Activated naive CD4-positive, alpha-beta T cell treated with anti-CD3 and anti-CD28 coated beads for 36 hours (primary cell): ENCODE measurements at regions of chr5 and their contacts with region 1.

Region 1: GRCh38 chr5:134225618-134226440 is at the start of gene PPP2CA:
- DNase-seq: peak; percentile 99
- H3K4me3 Mint-ChIP-seq: peak within 1 kb of the TSS; percentile 96
- H3K27ac Mint-ChIP-seq: peak within 1 kb of the TSS; percentile 96
- H3K4me1 Mint-ChIP-seq: peaks cover 52% of the 10 kb centered on the region
- H3K27me3 Mint-ChIP-seq: no peaks in the 10 kb centered on the region
- total RNA-seq, gene PPP2CA: 132 to 135 TPM

Region 2: DNA sequence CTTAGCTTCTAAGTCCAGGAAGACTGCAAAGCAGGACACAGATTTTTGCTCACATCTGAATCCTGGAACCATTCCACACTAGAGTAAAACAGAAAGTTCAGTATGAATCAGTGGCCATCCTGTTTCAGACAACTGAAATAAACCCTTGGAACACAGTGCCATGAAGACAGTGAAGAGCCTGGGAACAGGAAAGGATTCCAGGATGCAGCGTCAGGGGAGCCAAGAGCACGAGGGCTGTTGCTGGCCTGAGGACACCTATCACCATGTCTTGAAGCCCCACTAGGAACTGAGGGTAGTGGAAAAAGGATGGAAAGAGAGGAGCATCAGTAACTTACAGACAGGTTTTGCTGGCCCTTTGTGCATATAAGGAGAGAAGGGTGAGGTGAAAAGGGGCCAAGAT is 498.2 kb before region 1 on chr5:
- CTCF ChIA-PET with region 1: no interaction called
- intact Hi-C with region 1: no loop called
- DNase-seq: no peak
- H3K4me3 Mint-ChIP-seq: no peak overlapping the region
- H3K27ac Mint-ChIP-seq: no peak overlapping the region
- H3K4me1 Mint-ChIP-seq: no peaks in the 10 kb centered on the region
- H3K27me3 Mint-ChIP-seq: peaks cover 8% of the 10 kb centered on the region

Region 3: DNA sequence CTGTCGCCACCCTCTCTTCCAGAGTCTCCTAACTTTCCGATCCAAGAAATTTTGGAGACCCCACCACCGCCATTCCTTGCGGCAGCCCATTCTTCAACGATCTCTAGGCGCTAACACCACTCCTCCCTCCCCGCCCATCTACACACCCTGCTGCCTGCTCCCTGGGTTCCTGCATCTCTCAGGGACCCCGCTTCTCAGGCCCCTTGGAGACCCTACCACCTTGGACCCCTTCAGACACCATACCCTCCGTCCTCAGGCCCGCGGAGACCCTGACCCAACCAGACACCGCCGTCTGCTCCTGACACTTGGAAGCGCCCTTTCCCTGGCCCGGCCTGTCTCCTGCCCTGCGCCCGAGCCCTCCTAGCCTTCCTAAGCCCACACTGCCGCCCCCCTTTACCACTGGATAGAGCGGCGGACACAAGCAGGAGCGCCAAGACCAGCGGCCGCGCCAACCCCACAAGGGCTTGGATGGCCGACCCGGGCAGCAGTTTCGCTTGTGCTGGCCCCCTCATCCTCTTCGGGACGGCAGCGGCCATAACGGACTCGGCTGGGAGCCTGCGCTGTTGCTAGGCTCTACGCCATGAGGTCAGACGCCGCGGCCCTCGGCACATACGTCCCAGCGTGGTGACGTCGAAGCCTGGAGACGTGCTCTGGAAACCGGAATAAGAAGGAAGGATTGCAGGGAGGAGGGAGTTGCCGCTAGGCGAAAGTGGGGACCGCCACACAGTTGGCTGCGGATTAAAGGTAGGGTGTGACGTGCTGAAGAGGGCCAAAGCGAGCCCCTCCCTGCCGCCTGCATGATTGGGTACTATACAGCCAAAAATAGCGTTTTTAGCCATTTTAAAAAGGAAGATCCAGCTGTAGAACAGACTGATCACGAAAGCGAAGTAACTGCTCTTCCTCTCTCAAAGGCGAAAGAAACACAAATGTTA is 257.5 kb before region 1 on chr5 and contains the start of gene C5orf15:
- CTCF ChIA-PET with region 1: no interaction called
- intact Hi-C with region 1: loop called (anchors 1 kb)
- DNase-seq: peak; percentile 96
- H3K4me3 Mint-ChIP-seq: peak within 1 kb of the TSS; percentile 96
- H3K27ac Mint-ChIP-seq: peak within 1 kb of the TSS; percentile 93
- H3K4me1 Mint-ChIP-seq: peaks cover 46% of the 10 kb centered on the region
- H3K27me3 Mint-ChIP-seq: no peaks in the 10 kb centered on the region
- total RNA-seq, gene C5orf15: 18.1 to 18.6 TPM

Region 4: GRCh38 chr5:134083517-134083916 is 142.3 kb before region 1 on chr5:
- CTCF ChIA-PET with region 1: no interaction called
- intact Hi-C with region 1: no loop called
- DNase-seq: peak; percentile 8
- H3K4me3 Mint-ChIP-seq: no peak overlapping the region
- H3K27ac Mint-ChIP-seq: no peak overlapping the region
- H3K4me1 Mint-ChIP-seq: peaks cover 79% of the 10 kb centered on the region
- H3K27me3 Mint-ChIP-seq: no peaks in the 10 kb centered on the region

Region 5: DNA sequence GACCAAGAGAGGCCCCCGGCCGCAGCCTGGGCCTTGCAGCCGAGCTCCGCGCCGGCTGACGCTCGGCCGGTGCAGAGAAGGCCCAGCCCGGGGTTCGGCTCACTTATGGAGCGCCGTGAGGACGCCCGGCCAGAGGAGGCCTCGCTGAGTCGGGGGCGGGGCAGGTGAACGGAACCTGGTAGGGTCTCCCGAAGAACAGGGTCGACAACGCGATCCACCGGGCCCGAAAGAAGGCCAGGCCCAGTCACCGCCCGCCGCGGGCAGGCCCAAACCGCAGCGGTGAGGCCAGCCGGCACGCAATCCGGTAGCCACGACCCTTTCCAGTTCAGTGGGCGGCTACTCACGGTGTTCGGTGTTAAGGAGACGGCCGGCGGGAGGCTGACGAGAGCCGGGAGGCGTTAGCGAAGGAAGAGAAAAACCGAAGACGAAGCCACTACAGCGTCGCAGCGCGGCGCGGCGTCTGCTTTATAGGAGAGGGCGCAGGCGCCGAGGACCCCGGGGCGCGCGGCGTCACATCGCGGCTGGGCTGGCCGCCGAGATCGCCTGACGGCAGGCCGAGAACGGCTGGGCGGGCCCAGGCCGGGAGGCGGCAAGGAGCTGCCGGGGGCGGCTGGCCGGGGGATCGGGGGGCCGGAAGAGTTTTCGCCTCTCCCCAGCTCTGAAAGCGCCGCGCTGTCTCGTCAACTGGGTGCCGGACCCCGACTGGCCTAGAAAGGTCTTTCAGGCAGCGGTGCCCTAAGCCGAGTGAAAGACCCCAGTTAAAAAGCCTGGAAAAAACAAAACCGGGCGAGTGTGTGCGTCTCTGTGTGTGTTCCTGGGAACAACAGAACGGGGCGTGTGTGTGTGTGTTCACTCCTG is 49.1 kb before region 1 on chr5 and contains the start of gene SKP1:
- CTCF ChIA-PET with region 1: no interaction called
- intact Hi-C with region 1: loop called (anchors 1 kb)
- DNase-seq: peak; percentile 83
- H3K4me3 Mint-ChIP-seq: peak within 1 kb of the TSS; percentile 96
- H3K27ac Mint-ChIP-seq: peak within 1 kb of the TSS; percentile 94
- H3K4me1 Mint-ChIP-seq: peaks cover 31% of the 10 kb centered on the region
- H3K27me3 Mint-ChIP-seq: no peaks in the 10 kb centered on the region
- total RNA-seq, gene SKP1: 307 to 309 TPM

Region 6: DNA sequence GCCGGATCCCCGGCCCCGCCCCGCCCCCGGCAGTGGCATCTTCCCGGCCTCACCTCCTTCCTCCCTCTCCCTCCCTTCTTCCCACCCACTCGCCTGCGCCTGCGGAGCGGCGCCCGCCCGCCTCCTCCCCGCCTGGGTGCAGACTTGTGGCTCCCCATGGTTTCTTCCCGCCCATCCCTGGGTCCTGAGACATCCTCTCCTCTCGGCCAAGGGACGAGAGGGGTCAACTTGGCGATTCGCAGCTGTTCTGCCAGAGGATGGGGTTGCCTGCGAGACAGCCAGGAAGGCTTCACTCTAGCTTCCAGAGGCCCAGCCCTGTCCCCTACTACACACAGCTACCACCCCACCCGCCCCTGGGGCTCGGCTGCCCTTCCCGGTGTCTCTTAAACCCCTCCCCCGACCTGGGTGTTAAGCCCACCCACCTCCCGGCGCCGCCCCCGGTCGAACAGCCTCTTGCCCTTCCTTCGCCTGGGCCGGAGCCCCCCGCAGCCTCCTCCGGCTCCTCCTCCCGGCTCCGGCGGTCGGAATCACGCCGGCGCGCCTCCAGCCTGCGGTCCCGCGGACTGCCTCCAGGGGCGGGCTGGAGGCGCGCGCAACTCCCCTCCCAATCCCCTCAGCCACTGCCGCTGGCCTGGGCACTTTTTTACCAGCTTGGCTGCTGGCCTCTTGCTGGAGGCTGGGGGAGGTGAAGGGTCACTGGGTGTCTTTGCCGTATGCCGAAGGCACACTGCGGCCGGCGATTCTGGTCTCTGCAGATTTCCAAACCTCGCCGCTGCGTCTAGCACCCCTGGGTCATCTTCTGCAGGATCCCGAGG is 301.5 kb after region 1 on chr5:
- CTCF ChIA-PET with region 1: no interaction called
- intact Hi-C with region 1: loop called (anchors 1 kb)
- DNase-seq: peak; percentile 78
- H3K4me3 Mint-ChIP-seq: peak overlapping the region; percentile 88
- H3K27ac Mint-ChIP-seq: peak overlapping the region; percentile 95
- H3K4me1 Mint-ChIP-seq: peaks cover 46% of the 10 kb centered on the region
- H3K27me3 Mint-ChIP-seq: no peaks in the 10 kb centered on the region

Region 7: DNA sequence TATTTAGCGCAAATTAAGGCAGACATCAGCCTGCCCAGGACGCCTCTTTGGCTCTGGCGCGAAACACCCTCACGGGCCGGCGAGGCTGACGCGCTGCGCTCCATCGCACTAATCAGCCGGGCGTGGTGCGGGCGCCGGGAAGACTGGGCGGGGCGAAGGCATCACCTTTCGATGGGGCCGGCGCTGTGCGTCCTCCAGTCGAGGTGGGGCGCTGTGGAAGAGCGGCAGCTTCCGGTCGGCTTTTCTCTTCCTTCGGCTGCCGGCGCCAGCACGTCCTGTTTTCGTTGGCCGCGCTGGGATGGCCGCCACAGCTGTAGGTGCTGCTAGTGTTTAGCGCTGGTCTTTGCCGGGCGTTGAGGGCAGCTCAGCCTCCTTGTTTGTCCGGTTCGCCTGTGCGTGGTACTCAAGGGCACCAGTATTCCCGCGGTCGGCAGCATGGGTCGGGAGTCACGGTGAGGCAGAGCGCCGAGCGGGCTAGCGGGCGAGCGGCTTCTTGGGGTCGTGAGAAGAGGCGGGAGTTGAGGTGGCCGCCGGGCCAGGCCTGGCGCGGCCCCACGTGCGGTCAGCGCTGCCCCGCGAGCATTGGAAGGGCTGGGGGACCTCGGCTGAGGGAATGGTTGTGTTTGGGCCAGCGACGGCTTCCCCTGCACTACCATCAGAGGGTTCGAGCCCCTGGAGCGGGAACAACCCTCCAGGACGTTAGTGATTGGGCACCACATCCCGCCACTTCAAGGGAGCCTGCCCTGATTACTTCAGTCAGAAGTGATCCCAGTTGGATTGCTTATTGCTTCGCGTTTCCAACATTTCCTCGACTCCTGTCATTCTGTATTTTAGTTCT is 532.9 kb after region 1 on chr5 and contains the start of gene DDX46:
- CTCF ChIA-PET with region 1: no interaction called
- intact Hi-C with region 1: loop called (anchors 2 kb)
- DNase-seq: peak; percentile 97
- H3K4me3 Mint-ChIP-seq: peak within 1 kb of the TSS; percentile 99
- H3K27ac Mint-ChIP-seq: peak within 1 kb of the TSS; percentile 80
- H3K4me1 Mint-ChIP-seq: peaks cover 34% of the 10 kb centered on the region
- H3K27me3 Mint-ChIP-seq: no peaks in the 10 kb centered on the region
- total RNA-seq, gene DDX46: 47.3 to 48.0 TPM